A549 (cell line): ENCODE measurements at regions of chr17 and their contacts with region 1.

Region 1: GRCh38 chr17:49987681-49988441 is 7.2 kb downstream of the DLX3 start:
- DNase-seq: peak in 1 of 2 experiments; percentile 59
- ATAC-seq: peak; percentile 52 to 81; a peak in 5 of 6 replicates
- H3K4me3 ChIP-seq: no peak overlapping the region
- H3K27ac ChIP-seq: peak overlapping the region in 1 of 2 experiments; percentile 41; a peak in 2 of 6 replicates
- H3K4me1 ChIP-seq: peaks cover 12% of the 10 kb centered on the region
- CTCF ChIP-seq: no peak
- EP300 ChIP-seq: no peak
- POLR2A ChIP-seq: no peak
- RAD21 ChIP-seq: no peak

Region 2: GRCh38 chr17:49968380-49969133 is 19.3 kb before region 1 on chr17:
- CTCF ChIA-PET with region 1: interaction called, 365 read pairs
- POLR2A ChIA-PET with region 1: interaction called, 3 read pairs
- DNase-seq: peak; percentile 86 to 95
- ATAC-seq: peak; percentile 83 to 92
- H3K4me3 ChIP-seq: peak overlapping the region; percentile 69
- H3K27ac ChIP-seq: peak overlapping the region; percentile 82 to 92
- H3K4me1 ChIP-seq: peaks cover 12% of the 10 kb centered on the region; the same call in 2 of the 3 replicates
- CTCF ChIP-seq: no peak
- EP300 ChIP-seq: no peak
- POLR2A ChIP-seq: peak; percentile 70
- RAD21 ChIP-seq: 0 out of 5 replicates have a peak, but pooled peaks of 1 of the 2 experiments have one; percentile 20

Region 3: GRCh38 chr17:49976163-49976827 is 11.6 kb before region 1 on chr17:
- CTCF ChIA-PET with region 1: interaction called, 365 read pairs
- POLR2A ChIA-PET with region 1: interaction called, 3 read pairs
- DNase-seq: no peak
- ATAC-seq: no peak
- H3K4me3 ChIP-seq: no peak overlapping the region
- H3K27ac ChIP-seq: no peak overlapping the region
- H3K4me1 ChIP-seq: no peaks in the 10 kb centered on the region
- CTCF ChIP-seq: no peak
- EP300 ChIP-seq: no peak
- POLR2A ChIP-seq: no peak
- RAD21 ChIP-seq: no peak